ENCODE measurements at regions of chr22 and their contacts with region 1.

Region 1: GRCh38 chr22:31211862-31212730 is at the start of gene LIMK2:
- DNase-seq: peak; percentile 98
- ATAC-seq: peak; percentile 100
- H3K4me3 Mint-ChIP-seq: peak within 1 kb of the TSS; percentile 90
- H3K27ac Mint-ChIP-seq: peak within 1 kb of the TSS; percentile 79
- H3K4me1 Mint-ChIP-seq: peaks cover 26% of the 10 kb centered on the region
- H3K27me3 Mint-ChIP-seq: no peaks in the 10 kb centered on the region
- CTCF ChIP-seq: peak; percentile 30
- total RNA-seq, gene LIMK2: 15.3 and 17.7 TPM in 2 replicates

Region 2: GRCh38 chr22:31080848-31081649 is 131.0 kb before region 1 on chr22 and contains the start of gene SMTN:
- CTCF ChIA-PET with region 1: no interaction called
- POLR2A ChIA-PET with region 1: no interaction called
- intact Hi-C with region 1: loop called (anchors 1 kb)
- DNase-seq: peak; percentile 93
- ATAC-seq: peak; percentile 75
- H3K4me3 Mint-ChIP-seq: peak within 1 kb of the TSS; percentile 90
- H3K27ac Mint-ChIP-seq: no peak within 1 kb of the TSS
- H3K4me1 Mint-ChIP-seq: peaks cover 36% of the 10 kb centered on the region
- H3K27me3 Mint-ChIP-seq: no peaks in the 10 kb centered on the region
- CTCF ChIP-seq: no peak
- total RNA-seq, gene SMTN: 2.8 and 3.1 TPM in 2 replicates

Region 3: DNA sequence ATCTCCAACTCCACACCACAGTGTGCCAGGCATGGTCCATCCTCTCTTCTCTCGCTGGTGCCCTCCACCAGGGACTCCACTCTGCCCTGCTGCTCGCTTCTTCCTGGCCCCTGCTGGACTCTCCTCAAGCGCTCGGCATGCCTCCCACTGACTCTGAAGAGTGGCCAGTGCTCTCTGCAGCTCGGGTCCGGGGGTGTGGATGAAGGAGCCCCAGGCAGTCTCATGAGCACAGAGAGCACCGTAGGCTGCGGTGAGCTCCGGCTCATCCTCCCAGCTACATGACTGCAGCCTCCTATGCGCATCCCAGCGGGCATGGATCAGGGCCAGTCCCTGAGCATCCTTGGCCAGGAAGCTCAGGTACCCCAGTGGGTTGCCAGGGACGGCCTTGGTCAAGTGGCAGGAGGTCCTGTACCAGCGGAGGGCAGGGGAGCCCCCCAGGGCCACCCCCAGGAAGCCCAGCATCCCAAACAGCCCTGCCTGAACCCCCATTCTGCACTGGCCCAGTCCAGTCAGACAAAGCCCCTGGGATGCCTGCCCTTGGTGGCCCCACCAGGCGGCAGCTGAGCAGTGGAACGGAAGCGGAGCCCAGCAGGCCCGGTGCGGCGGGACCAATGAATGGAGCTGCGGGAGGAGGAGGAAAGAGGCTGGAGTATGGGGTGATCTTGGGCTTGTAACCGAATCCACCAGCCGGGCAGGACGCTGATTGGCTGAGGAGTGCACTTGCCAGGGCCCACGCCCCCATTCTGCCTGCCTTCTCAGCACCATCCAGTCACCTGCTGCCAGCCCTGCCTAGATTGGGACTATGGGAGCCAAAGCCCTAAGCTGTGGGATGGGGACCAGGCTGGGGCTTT is 72.0 kb before region 1 on chr22 and contains the start of gene PLA2G3:
- CTCF ChIA-PET with region 1: no interaction called
- POLR2A ChIA-PET with region 1: no interaction called
- intact Hi-C with region 1: no loop called
- DNase-seq: no peak
- ATAC-seq: no peak
- H3K4me3 Mint-ChIP-seq: no peak within 1 kb of the TSS
- H3K27ac Mint-ChIP-seq: no peak within 1 kb of the TSS
- H3K4me1 Mint-ChIP-seq: no peaks in the 10 kb centered on the region
- H3K27me3 Mint-ChIP-seq: peaks cover 11% of the 10 kb centered on the region
- CTCF ChIP-seq: no peak
- total RNA-seq, gene PLA2G3: not detected in 2 replicates

Region 4: DNA sequence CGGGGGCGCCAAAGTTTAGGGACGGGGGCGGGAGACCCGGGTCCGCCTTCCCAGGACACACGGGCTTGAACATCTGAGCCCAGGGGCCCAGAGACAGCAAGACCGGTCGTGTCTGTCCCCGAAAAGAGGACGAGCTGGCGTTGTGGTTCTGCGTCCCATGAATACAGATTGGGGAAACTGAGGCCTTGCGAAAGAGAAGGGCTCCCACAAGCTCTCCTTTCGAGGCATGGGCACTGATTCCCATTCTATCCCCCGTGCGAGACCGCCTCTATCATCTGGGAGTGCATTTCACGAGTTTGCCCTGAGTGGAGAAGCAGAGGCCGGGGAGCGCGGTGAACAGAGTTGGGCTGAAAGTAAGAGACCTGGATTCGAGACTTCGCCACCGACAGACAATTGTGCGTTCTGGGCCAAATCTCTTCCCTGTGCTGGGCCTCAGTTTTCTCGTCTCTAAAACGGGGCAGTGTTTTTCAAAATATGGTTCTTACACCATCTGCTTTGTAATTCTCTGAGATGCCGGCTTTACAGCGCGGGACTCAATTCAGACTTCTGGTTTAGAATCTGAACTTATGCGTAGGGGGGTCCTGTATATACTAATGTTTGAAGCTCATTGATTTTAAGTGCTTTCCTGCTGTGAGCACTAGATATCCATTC is 51.6 kb before region 1 on chr22:
- CTCF ChIA-PET with region 1: interaction called, 4 read pairs
- POLR2A ChIA-PET with region 1: interaction called, 11 read pairs
- intact Hi-C with region 1: loop called (anchors 1 kb)
- DNase-seq: no peak
- ATAC-seq: peak; percentile 40
- H3K4me3 Mint-ChIP-seq: peak overlapping the region; percentile 99
- H3K27ac Mint-ChIP-seq: peak overlapping the region; percentile 96
- H3K4me1 Mint-ChIP-seq: peaks cover 30% of the 10 kb centered on the region
- H3K27me3 Mint-ChIP-seq: no peaks in the 10 kb centered on the region
- CTCF ChIP-seq: no peak

Region 5: DNA sequence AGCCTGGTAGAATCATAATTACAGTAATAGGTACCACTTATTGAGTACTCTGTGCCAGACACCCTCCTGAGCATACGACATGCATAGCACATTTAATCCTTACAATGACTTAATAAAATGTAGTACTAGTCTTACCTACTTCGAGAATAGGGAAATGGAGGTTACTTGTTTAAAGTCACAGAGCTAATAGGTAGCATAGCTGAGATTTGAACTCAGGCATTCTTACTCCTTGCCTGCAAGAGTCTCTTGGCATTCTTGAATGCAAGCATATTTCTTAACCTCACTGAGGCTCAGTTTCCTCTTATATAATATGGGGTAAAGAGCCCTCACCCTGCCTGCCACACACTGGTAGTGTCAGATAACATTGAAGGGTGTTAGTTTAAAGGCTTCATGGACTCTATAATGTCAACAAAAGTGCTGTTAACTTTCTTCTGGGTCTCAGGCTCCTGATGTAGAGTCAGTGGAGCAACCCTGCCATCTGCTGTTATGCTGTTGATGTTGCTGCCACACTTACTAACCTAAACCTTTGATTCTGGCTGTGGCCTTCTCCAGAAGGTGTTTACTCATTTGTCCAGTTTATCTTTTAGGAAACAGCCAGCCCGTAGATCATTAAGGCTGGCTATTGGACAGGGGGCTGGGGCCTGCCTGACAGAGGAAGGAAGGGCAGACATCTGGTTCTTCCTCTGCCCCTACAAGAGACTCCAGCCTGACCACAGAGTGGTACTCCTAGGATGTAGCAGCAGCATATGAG is 18.9 kb after region 1 on chr22:
- CTCF ChIA-PET with region 1: interaction called, 6 read pairs
- POLR2A ChIA-PET with region 1: interaction called, 8 read pairs
- intact Hi-C with region 1: loop called (anchors 2 kb)
- DNase-seq: no peak
- ATAC-seq: peak; percentile 52
- H3K4me3 Mint-ChIP-seq: no peak overlapping the region
- H3K27ac Mint-ChIP-seq: no peak overlapping the region
- H3K4me1 Mint-ChIP-seq: peaks cover 23% of the 10 kb centered on the region
- H3K27me3 Mint-ChIP-seq: no peaks in the 10 kb centered on the region
- CTCF ChIP-seq: no peak

Region 6: DNA sequence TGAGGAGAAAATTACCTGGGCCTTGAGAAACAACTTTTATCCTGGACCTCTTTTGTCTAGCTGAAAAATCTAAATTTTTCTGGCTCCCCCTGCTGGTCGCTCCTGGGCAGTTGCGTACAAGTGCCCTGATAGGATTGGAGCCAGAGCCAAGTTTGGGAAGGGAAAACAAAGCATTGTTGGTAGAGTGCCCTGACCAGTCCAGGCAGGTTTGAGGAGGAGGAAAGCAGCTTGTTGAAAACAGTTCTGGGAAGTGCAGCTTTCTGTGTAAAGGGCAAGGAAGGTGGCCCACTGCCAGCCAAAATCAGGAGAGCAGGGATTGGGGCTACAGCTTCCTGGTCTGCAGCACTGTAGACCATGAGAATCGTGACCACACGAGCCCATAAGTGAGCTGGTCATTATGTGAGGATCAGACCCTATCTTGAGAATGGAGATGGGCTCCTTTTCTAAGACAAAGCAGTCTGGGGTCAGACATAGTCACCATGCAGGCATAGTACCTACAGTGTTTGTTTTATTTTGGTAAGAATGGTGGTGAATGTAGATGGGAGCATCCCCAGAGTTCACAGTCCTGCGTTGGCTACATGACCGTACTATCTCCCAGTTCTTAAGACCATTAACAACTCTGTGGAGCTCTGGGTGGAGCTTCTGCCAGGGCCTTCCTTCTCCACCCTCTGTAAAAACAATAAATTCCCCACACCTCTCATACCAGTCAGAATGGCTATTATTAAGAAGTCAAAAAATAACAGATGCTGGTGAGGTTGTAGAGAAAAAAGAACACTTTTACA is 101.5 kb after region 1 on chr22:
- CTCF ChIA-PET with region 1: interaction called, 23 read pairs
- POLR2A ChIA-PET with region 1: interaction called, 4 read pairs
- intact Hi-C with region 1: loop called (anchors 1 kb)
- DNase-seq: peak; percentile 39
- ATAC-seq: peak; percentile 54
- H3K4me3 Mint-ChIP-seq: no peak overlapping the region
- H3K27ac Mint-ChIP-seq: no peak overlapping the region
- H3K4me1 Mint-ChIP-seq: peaks cover 7% of the 10 kb centered on the region
- H3K27me3 Mint-ChIP-seq: no peaks in the 10 kb centered on the region
- CTCF ChIP-seq: no peak

Region 7: DNA sequence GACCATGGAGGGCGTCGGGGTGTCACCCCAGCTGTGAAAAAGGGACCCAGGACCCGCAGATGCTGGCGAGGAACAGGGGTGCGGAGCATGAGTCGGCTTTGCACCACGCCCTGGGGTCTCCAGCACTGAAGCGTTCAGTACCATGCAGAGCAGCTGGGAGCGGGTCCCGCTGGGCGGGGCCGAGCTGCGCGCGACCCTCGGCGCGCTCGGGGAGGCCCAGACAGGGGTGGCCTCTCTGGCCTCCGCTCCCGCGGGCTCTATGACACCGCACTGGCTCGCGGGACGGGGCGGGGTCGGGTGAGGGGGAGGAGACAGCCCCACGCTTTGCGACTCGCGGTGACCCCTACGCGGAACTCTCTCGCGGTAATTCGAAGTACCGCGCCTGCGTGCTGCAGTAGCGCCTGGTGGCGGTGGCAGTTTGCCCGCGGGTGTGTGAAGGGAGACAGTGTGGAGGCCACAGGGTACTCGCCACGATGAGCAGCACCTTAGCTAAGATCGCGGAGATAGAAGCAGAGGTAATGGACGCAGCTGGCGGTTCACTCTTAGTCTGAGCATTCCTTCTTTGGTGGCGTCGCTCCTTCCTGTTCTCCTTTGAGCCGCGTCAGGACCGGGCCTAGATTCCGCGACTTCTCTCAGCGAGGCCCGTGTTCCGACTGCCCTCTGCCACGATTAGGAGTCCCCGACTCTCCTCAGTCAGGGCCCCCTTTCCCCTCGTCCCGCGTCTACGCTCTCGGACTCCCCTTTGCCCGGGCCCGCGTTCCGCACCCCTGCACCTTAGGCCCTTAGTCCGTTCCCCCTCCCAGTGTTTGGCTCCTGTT is 187.3 kb after region 1 on chr22 and contains the start of gene DRG1:
- CTCF ChIA-PET with region 1: no interaction called
- POLR2A ChIA-PET with region 1: no interaction called
- intact Hi-C with region 1: loop called (anchors 1 kb)
- DNase-seq: peak; percentile 97
- ATAC-seq: peak; percentile 98
- H3K4me3 Mint-ChIP-seq: peak within 1 kb of the TSS; percentile 93
- H3K27ac Mint-ChIP-seq: peak within 1 kb of the TSS; percentile 88
- H3K4me1 Mint-ChIP-seq: peaks cover 20% of the 10 kb centered on the region
- H3K27me3 Mint-ChIP-seq: no peaks in the 10 kb centered on the region
- CTCF ChIP-seq: no peak
- total RNA-seq, gene DRG1: 68.5 and 71.1 TPM in 2 replicates

Region 8: GRCh38 chr22:33104147-33104854 is 1892.2 kb after region 1 on chr22:
- CTCF ChIA-PET with region 1: no interaction called
- POLR2A ChIA-PET with region 1: no interaction called
- intact Hi-C with region 1: no loop called
- DNase-seq: no peak
- ATAC-seq: no peak
- H3K4me3 Mint-ChIP-seq: no peak overlapping the region
- H3K27ac Mint-ChIP-seq: no peak overlapping the region
- H3K4me1 Mint-ChIP-seq: no peaks in the 10 kb centered on the region
- H3K27me3 Mint-ChIP-seq: peaks cover 5% of the 10 kb centered on the region
- CTCF ChIP-seq: no peak